ENCODE measurements at regions of chr4 and their contacts with region 1.

Region 1: GRCh38 chr4:5399790-5400421 is 308.5 kb downstream of the EVC2 start:
- DNase-seq: peak; percentile 63
- H3K4me3 ChIP-seq: peak overlapping the region in 1 of 2 experiments; percentile 41; a peak in 1 of 4 replicates
- H3K27ac ChIP-seq: no peak overlapping the region
- H3K4me1 ChIP-seq: peaks cover 0 to 4% of the 10 kb centered on the region in 2 experiments; a peak in 1 of 4 replicates
- H3K27me3 ChIP-seq: no peaks in the 10 kb centered on the region
- CTCF ChIP-seq: peak; percentile 71
- EP300 ChIP-seq: no peak
- RAD21 ChIP-seq: peak; percentile 70

Region 2: GRCh38 chr4:5307928-5308327 is 92.0 kb before region 1 on chr4:
- CTCF ChIA-PET with region 1: no interaction called
- POLR2A ChIA-PET with region 1: no interaction called
- DNase-seq: no peak
- H3K4me3 ChIP-seq: no peak overlapping the region
- H3K27ac ChIP-seq: no peak overlapping the region
- H3K4me1 ChIP-seq: no peaks in the 10 kb centered on the region
- H3K27me3 ChIP-seq: no peaks in the 10 kb centered on the region
- CTCF ChIP-seq: no peak; the same call in 1 of the 2 replicates
- EP300 ChIP-seq: no peak
- RAD21 ChIP-seq: no peak

Region 3: DNA sequence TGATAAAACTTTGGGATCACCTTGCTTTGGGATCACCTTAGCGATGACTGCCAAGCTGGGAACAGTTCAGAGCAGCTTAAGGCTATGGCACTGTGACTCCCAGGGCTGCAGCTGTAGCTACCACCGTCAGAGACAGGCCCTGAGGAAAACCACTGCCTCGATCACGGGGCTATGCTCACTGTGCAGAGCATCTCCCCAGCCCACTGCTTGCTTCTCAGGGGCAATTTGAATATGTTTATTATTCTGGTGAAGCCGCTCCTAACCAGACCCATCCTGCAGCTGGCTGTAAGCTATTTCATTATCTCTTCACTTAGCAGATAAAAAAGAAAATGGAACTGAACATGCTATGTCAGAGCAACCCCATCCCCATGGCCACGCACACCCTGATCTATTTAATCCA is 20.0 kb before region 1 on chr4:
- CTCF ChIA-PET with region 1: interaction called, 10 read pairs
- POLR2A ChIA-PET with region 1: no interaction called
- DNase-seq: no peak
- H3K4me3 ChIP-seq: no peak overlapping the region
- H3K27ac ChIP-seq: no peak overlapping the region
- H3K4me1 ChIP-seq: no peaks in the 10 kb centered on the region; a peak in 1 of 4 replicates
- H3K27me3 ChIP-seq: no peaks in the 10 kb centered on the region; the same call in 1 of the 2 replicates
- CTCF ChIP-seq: no peak
- EP300 ChIP-seq: no peak
- RAD21 ChIP-seq: no peak

Region 4: GRCh38 chr4:5409972-5410618 is 10.2 kb after region 1 on chr4:
- CTCF ChIA-PET with region 1: interaction called, 22 read pairs
- POLR2A ChIA-PET with region 1: no interaction called
- DNase-seq: no peak
- H3K4me3 ChIP-seq: peak overlapping the region; percentile 9 to 24; a peak in 2 of 4 replicates
- H3K27ac ChIP-seq: no peak overlapping the region
- H3K4me1 ChIP-seq: no peaks in the 10 kb centered on the region
- H3K27me3 ChIP-seq: no peaks in the 10 kb centered on the region
- CTCF ChIP-seq: peak; percentile 32; the same call in 1 of the 2 replicates
- EP300 ChIP-seq: no peak
- RAD21 ChIP-seq: no peak

Region 5: DNA sequence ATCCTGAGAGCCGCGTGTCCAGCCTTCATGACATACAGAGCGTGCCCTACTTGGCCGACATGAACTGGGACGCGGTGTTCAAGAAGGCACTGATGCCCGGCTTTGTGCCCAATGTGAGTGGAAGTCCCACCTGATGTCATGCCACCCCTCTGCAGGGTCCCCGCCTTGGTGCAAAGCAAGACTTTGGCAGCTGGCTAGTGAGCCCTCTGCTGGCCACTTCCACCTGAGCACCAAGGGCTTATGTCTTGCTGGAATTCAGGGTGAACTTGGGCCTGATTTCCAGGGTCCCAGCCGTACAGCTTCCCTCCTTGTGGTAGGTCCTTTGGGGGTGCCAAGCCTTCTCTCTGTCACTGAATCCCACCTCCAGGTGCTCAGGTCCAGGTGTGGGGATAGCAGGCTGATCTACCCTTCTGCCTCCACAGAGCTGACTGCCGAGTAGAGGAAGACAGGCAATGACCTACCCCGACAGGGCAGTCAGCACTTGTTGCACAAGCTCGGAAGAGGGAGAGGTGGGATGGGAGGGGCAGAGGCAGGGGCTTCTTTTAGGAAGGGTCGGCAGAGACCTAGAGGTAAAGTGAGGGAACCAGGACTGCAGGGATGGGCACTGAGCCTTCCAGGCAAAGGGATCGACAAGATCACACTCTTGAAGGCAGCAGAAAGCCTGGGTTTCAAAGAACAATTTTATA is 60.4 kb after region 1 on chr4:
- CTCF ChIA-PET with region 1: interaction called, 16 read pairs
- POLR2A ChIA-PET with region 1: no interaction called
- DNase-seq: peak; percentile 60
- H3K4me3 ChIP-seq: no peak overlapping the region; a peak in 1 of 4 replicates
- H3K27ac ChIP-seq: no peak overlapping the region
- H3K4me1 ChIP-seq: peaks cover 0 to 3% of the 10 kb centered on the region in 2 experiments; a peak in 1 of 4 replicates
- H3K27me3 ChIP-seq: no peaks in the 10 kb centered on the region; the same call in 1 of the 2 replicates
- CTCF ChIP-seq: peak; percentile 56
- EP300 ChIP-seq: no peak
- RAD21 ChIP-seq: peak; percentile 45

Region 6: DNA sequence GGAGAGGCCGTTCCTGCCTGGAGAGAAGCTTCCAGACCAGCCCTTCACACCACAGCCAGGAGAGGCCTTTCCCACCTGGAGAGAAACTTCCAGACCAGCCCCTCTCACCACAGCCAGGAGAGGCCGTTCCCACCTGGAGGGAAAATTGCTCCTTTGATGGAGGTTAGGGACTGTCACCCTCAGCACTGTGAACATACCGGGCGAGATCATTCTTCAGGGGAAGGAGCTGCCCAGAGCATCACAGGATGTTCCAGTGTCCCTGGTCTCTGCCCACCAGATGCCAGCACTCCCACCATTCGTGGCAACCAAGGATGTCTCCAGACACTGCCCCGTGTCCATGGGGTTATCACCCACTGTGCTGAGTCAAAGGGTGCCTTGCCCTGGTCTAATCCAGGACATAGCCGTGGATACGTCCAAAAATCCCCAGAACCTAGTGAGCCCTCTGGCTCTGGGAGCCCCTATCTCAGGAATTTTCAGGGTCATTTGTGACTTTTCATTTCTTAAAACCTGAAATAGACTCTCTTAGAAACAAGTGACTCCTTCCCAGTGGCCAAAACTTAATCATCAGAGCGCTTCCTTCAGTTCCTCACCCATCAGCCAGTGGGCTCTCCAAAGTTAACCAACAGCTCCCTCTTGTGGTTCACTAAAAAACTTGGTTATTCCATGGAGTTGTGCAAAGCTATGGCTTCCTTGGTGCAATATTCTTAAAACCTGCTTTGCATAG is 412.8 kb after region 1 on chr4:
- CTCF ChIA-PET with region 1: interaction called, 15 read pairs
- POLR2A ChIA-PET with region 1: no interaction called
- DNase-seq: peak; percentile 58
- H3K4me3 ChIP-seq: no peak overlapping the region; a peak in 1 of 4 replicates
- H3K27ac ChIP-seq: no peak overlapping the region
- H3K4me1 ChIP-seq: peaks cover 0 to 10% of the 10 kb centered on the region in 2 experiments; a peak in 1 of 4 replicates
- H3K27me3 ChIP-seq: no peaks in the 10 kb centered on the region
- CTCF ChIP-seq: peak; percentile 80
- EP300 ChIP-seq: no peak
- RAD21 ChIP-seq: peak; percentile 76